ENCODE measurements at regions of chr1 and their contacts with region 1.

Region 1: DNA sequence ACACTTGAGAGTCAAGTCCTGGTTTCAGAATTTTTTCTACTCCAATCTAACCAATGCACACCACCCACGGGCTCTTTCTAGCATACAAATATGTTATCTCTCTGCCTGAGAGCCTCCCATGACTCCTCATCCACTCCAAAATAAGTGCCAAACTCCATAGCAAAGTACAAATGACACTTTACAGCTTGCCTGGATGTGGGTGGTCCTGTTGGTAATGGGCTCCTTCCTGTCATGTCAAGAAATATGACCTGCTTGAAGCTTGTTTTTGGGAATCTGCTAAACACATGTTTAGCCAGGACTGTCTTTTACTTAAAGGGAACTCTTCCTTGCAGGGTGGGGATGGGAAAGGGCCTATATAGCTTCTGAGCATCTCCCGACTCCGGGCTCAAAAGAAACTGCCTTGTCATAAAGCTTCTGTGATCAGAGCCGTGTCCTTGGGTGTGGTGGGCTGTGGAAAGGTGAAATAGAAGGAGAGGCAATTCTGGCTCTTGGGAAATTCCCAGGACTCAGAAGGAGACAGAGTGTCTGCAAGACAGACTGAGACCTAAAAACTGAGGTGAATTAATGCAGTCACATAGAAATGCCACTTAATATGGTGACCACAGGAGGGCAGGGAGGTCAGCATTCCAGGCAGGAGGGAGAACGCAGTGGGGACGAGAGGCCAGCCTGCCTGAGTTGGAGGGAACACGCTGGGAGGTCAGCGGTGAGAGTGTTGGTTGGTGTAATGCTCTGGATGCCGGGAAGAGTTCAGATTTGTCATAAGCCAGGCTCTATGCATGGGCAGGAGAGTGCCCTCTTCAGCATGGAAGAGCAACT is 6.1 kb upstream of the IGFN1 start:
- DNase-seq: peak in 6 of 7 donors; percentile 70 to 81 (median 74)
- H3K4me3 ChIP-seq: no peak overlapping the region
- H3K27ac ChIP-seq: peak overlapping the region in 1 of 5 donors; percentile 27
- H3K4me1 ChIP-seq: peaks cover 0 to 7% of the 10 kb centered on the region in 2 donors
- H3K27me3 ChIP-seq: no peaks in the 10 kb centered on the region
- CTCF ChIP-seq: peak; percentile 54 to 71 (median 62)
- POLR2A ChIP-seq: no peak

Region 2: GRCh38 chr1:200306944-200307754 is 877.4 kb before region 1 on chr1:
- intact Hi-C with region 1: no loop called
- DNase-seq: peak in 1 of 7 donors; percentile 11
- H3K4me3 ChIP-seq: no peak overlapping the region
- H3K27ac ChIP-seq: no peak overlapping the region
- H3K4me1 ChIP-seq: peaks cover 0 to 9% of the 10 kb centered on the region in 2 donors
- H3K27me3 ChIP-seq: peaks cover 3% of the 10 kb centered on the region
- CTCF ChIP-seq: peak; percentile 52 to 89 (median 64)
- POLR2A ChIP-seq: no peak

Region 3: DNA sequence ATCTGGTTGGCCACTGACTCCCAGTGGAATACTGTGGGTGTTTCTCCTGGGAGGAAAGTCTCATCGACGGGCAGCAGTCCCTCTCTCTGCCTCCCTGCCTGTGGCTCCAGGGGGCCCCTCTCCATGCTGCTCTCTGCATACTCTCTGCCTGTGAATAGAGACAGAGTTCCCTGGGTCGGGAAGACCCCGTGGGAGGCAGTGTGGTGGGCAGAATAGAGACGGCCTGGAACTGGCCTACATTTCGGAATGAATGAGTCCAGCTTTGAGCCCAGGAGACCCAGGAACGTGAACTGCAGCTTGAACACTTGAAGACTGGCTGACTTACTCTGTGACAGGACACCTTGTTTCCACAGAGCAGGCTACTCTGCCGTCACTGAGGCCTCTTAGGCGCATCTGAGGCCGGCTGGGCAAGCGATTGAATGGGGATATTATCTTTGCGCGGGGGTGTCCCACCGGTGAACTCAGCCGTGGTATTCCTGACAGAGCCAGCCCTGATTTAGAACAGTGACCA is 225.0 kb before region 1 on chr1:
- intact Hi-C with region 1: no loop called
- DNase-seq: no peak
- H3K4me3 ChIP-seq: no peak overlapping the region
- H3K27ac ChIP-seq: no peak overlapping the region
- H3K4me1 ChIP-seq: no peaks in the 10 kb centered on the region
- H3K27me3 ChIP-seq: no peaks in the 10 kb centered on the region
- CTCF ChIP-seq: no peak
- POLR2A ChIP-seq: no peak

Region 4: DNA sequence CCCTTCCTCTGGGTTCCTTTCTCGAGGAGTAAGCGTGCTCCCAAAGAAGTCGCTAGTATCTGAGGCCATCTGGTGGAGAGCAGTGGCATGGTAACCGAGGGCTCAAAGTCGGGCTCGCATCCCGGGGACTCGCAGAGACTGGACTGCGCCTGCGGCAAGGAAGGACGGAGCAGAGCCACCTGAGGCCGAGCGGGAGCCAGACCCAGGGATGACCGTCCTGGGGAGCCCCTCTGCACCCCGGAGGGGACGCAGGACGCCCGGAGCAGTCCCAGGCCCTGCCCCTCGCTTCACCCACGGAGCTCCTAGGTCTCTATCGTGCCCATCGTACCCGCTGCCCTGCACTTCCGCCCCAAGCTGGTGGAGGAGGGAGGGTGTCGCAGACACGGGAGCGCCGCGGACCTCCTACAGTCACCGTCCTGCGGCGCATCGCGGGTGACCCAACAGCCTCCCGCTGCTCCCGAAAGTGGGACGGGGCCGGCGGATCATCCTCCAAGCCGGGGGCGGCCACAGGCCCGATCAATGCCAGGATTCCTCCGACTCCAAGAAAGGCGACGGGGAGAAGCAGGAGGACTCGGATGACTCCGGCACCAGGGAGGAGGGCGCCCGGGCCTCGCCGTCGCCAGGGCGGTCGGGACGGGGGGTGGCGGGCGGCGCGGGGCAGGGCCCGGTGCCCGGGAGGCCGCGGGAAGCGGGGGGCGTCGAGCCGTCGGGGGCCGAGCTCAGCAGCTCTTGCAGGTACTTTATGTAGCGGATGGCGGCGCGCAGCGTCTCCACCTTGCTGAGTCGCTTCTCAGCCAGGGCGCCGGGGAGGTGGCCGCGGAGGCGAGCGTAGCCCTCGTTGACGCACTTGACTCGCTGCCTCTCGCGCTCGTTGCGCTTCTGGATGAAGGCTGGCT is 70.0 kb before region 1 on chr1:
- intact Hi-C with region 1: loop called in 1 of 2 experiments (anchors 10 kb)
- DNase-seq: peak; percentile 87 to 96 (median 94)
- H3K4me3 ChIP-seq: peak overlapping the region in 3 of 4 donors; percentile 38 to 79 (median 41)
- H3K27ac ChIP-seq: peak overlapping the region in 1 of 5 donors; percentile 74
- H3K4me1 ChIP-seq: peaks cover 0 to 3% of the 10 kb centered on the region in 2 donors
- H3K27me3 ChIP-seq: no peaks in the 10 kb centered on the region
- CTCF ChIP-seq: peak; percentile 76 to 95 (median 89)
- POLR2A ChIP-seq: peak in 1 of 2 donors; percentile 43

Region 5: GRCh38 chr1:201530741-201531531 is 346.4 kb after region 1 on chr1:
- intact Hi-C with region 1: no loop called
- DNase-seq: peak; percentile 72 to 93 (median 81)
- H3K4me3 ChIP-seq: no peak overlapping the region
- H3K27ac ChIP-seq: no peak overlapping the region
- H3K4me1 ChIP-seq: peaks cover 0 to 20% of the 10 kb centered on the region in 2 donors
- H3K27me3 ChIP-seq: no peaks in the 10 kb centered on the region
- CTCF ChIP-seq: peak; percentile 52 to 86 (median 70)
- POLR2A ChIP-seq: no peak

Measured in adrenal gland (tissue), 19 donors.